Activated CD8-positive, alpha-beta T cell treated with anti-CD3 and anti-CD28 coated beads, Interleukin-2, amount 10 ng/mL, durations not matched to agents 7 days and 5 days (primary cell): ENCODE measurements at regions of chr5 and their contacts with region 1.

Region 1: DNA sequence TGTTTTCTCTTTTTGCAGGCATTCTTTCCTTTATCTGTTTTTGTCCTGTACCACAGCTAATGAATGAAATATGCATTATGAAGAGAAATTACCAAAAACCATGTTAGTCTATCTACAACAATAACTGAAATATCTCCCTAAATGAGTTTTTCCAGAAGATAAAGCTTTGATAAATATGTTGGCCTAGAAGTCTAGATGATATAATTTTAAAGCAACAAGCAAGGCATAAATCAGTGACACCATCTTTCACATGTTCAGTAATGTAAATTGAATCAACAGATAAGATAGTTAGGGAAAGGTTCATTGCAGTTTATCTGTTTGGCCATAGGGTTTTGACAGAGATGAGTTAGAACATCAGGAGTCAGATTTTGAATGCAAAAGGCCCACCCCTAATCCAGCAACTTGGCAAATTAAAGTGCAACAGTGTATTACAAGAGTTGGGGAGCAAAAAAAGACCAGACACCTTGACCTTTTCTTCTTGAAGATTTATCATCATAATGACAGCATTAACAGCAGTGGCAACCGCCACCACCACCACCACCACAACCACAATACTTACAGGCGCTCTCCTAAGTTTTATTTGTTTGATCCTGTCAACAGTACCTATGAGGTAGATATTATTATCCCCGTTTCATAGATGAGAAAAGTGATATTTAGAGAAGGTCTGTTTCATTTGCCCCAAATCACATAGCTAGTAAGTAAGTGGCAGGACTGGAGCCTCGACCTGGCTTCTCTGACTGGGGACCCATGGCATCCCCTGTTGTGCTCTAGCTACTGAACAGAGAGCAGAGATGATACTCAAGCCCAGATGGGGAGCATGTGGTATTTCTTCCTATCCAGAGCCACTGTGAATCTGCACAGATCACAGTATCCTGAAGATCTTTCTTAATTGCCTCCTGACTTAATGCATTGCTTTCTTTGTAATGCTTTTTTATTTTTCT is 122.8 kb upstream of the DHFR start:
- DNase-seq: peak; percentile 50
- ATAC-seq: peak; percentile 73
- H3K4me3 Mint-ChIP-seq: no peak overlapping the region
- H3K27ac Mint-ChIP-seq: peak overlapping the region; percentile 56
- H3K4me1 Mint-ChIP-seq: peaks cover 13% of the 10 kb centered on the region
- H3K27me3 Mint-ChIP-seq: no peaks in the 10 kb centered on the region

Region 2: DNA sequence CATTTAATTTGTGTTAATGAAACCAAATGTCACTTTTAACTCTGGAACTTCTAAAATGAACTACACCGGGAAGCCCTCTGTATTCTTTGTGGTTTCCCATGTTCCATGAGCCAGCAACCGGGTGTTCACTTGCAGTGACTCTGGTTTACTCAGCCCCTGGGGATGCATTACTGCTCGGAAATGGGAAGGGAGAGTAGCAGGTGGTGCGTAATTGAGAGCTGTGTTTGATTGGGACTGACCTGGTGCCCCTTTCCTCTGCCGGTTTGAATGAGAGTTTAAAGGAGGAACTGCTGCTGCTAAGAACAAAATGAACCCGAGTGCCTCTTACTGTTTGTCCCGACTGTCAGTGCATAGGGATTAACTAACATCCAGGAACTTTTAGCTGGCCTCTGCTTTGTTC is 22.7 kb before region 1 on chr5:
- CTCF ChIA-PET with region 1: interaction called, 11 read pairs
- POLR2A ChIA-PET with region 1: no interaction called
- DNase-seq: peak; percentile 37
- ATAC-seq: peak; percentile 16
- H3K4me3 Mint-ChIP-seq: peak overlapping the region; percentile 61
- H3K27ac Mint-ChIP-seq: peak overlapping the region; percentile 93
- H3K4me1 Mint-ChIP-seq: peaks cover 64% of the 10 kb centered on the region
- H3K27me3 Mint-ChIP-seq: no peaks in the 10 kb centered on the region